Transverse colon (tissue), 4 donors: ENCODE measurements at regions of chr2 and their contacts with region 1.

Region 1: DNA sequence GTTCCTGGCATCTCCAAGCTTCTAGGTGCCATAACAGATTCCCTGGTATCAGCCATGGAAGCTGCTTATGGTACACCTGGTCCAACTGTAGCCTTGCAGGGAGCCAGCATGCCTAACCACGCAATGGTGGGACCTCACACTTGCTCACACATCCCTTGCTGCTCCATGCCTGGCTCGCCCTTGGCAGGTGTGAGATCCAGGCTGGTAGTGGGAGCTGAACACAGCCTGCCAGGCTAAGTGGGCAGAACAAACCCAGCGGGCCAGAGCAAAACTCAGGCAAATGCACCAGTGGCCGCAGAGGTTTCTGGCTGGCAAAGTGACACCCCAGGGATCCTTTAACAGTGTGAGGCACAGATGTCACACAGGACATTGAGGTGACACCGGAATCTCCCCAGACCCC is 185.8 kb downstream of the NDUFA10 start:
- DNase-seq: no peak
- H3K4me3 ChIP-seq: no peak overlapping the region
- H3K27ac ChIP-seq: no peak overlapping the region
- H3K4me1 ChIP-seq: no peaks in the 10 kb centered on the region
- H3K27me3 ChIP-seq: no peaks in the 10 kb centered on the region
- CTCF ChIP-seq: no peak
- EP300 ChIP-seq: no peak
- POLR2A ChIP-seq: no peak

Region 2: DNA sequence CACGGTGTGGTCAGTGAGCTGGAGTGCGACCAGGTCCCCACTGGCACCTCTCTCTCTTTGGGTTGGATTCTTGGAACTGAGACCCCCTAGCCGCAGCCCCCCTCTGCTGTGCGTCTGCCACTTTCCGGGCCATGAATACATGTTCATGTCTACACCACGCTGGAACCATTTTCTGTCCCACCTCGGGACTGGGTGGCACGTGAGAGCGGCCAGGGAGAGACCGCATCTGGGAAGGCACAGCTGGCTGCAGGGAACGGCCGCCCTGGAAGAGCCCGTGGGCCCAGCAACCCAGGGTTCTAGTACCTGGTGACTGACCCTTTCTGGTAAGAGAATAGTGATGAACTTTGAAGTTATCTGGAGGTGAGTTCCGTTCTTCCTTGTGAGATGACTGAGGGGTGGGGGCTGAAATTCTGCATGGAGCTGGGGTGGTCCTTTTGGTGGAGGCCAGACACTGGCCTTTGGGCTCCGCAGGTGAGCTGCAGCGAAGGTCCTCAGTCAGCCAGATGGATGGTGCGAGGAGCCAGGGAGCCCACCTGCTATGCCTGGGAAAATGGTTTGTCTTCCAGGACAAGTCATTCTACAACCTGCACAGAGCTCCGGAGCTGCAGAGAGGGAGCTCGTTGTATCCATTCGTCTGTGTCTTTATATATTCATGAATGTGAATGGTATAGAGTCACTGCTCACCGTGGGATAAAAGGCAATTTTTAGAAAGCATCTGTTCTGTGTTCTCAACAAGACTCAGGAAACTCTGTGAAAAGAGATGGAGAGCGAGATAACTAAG is 37.7 kb before region 1 on chr2:
- in situ Hi-C with region 1: no loop called
- intact Hi-C with region 1: loop called (anchors 1 kb)
- DNase-seq: no peak
- H3K4me3 ChIP-seq: no peak overlapping the region
- H3K27ac ChIP-seq: no peak overlapping the region
- H3K4me1 ChIP-seq: no peaks in the 10 kb centered on the region
- H3K27me3 ChIP-seq: no peaks in the 10 kb centered on the region
- CTCF ChIP-seq: no peak
- EP300 ChIP-seq: no peak
- POLR2A ChIP-seq: no peak

Region 3: DNA sequence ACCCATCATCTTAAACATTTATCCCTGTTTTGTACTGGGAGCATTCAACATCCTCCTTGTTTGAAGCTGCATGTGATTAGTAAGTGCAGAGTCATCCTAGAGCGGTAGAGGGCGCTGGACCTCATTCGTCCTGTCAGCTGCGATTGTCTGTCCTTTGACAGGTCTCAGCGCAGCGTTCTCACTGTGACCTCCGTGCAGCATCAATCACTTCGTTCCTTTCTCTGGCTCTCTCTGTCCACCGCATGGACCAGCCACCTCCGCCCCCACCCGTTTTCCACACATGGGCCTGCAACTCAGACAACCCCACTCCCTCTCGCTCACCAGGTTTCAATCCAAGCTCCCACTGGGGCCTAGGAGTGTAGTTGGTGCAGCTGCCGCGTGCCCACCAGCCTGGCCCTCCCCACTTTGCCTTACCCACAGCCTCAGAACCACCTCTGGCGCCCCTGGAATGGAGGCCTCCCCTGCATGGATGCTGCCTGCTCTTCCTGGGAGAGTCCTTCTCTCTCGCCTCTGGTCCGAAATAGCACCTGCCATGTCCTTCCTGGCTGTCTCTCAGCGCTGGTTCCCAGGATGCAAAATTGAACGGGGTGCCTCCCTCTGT is 95.4 kb after region 1 on chr2:
- in situ Hi-C with region 1: no loop called
- intact Hi-C with region 1: no loop called
- DNase-seq: peak; percentile 71
- H3K4me3 ChIP-seq: no peak overlapping the region
- H3K27ac ChIP-seq: no peak overlapping the region
- H3K4me1 ChIP-seq: no peaks in the 10 kb centered on the region
- H3K27me3 ChIP-seq: no peaks in the 10 kb centered on the region
- CTCF ChIP-seq: peak; percentile 71 to 80 (median 78)
- EP300 ChIP-seq: no peak
- POLR2A ChIP-seq: no peak

Region 4: GRCh38 chr2:240300261-240300821 is 461.0 kb after region 1 on chr2:
- in situ Hi-C with region 1: no loop called
- intact Hi-C with region 1: no loop called
- DNase-seq: no peak
- H3K4me3 ChIP-seq: no peak overlapping the region
- H3K27ac ChIP-seq: no peak overlapping the region
- H3K4me1 ChIP-seq: no peaks in the 10 kb centered on the region
- H3K27me3 ChIP-seq: no peaks in the 10 kb centered on the region
- CTCF ChIP-seq: no peak
- EP300 ChIP-seq: no peak
- POLR2A ChIP-seq: no peak